ENCODE measurements at regions of chr1 and their contacts with region 1.

Region 1: DNA sequence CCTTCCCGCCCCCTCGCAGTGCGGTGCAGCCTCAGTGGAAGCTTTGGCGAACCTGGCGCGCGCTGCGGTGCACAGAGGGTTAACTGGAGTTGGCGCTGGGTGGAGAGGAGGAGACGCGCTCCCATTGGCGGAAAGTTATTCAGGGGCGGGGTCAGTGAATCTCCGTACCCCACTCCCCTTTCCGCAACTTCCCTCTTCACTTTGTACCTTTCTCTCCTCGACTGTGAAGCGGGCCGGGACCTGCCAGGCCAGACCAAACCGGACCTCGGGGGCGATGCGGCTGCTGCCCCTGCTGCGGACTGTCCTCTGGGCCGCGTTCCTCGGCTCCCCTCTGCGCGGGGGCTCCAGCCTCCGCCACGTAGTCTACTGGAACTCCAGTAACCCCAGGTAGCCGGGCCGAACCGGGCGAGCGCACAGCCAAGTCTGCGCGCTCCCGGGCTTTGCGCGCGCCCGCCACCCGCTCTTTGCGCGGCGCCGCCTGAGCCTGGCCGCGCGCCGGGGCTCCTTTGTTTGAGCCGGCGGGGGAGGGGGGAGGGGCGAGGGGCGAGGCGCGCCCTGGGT is at the start of gene EFNA4:
- DNase-seq: peak; percentile 96
- H3K4me3 ChIP-seq: peak within 1 kb of the TSS; percentile 81
- H3K27ac ChIP-seq: peak within 1 kb of the TSS; percentile 89
- H3K4me1 ChIP-seq: peaks cover 31% of the 10 kb centered on the region
- H3K27me3 ChIP-seq: no peaks in the 10 kb centered on the region
- CTCF ChIP-seq: no peak
- total RNA-seq, gene EFNA4: 17.0 and 18.8 TPM in 2 replicates

Region 2: DNA sequence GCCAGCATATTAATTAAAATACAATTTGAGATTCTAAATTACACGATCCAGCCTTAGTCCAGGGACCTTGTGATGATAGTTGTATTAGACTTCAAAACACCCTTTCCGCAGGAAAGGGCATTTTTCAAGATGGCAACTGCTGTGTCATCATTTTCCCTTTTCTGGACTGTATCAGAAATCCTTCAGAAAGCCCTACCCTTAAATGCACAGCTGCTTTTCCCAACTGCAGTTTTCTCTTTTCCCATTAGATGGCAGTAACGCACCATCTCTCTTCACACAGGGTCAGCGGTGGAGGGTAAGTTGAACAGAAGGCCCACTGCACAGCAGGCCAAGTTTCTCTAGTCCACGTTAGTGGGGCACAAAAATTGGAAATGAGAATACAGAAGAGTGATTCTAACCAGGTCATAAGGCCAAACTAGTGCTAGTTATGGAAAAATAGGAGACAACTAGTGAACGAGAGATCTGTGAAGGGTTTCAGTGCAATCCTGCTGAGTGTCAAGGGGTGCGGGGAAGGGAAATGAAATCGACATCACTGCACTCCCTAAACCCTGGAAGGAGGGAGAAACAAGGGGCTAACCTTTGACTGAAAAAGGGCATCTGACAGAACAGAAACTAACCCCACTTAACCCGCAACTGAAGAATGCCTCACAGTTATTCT is 583.7 kb before region 1 on chr1:
- CTCF ChIA-PET with region 1: no interaction called
- POLR2A ChIA-PET with region 1: no interaction called
- intact Hi-C with region 1: loop called (anchors 5 kb)
- DNase-seq: peak; percentile 95
- H3K4me3 ChIP-seq: no peak overlapping the region
- H3K27ac ChIP-seq: peak overlapping the region; percentile 39
- H3K4me1 ChIP-seq: peaks cover 33% of the 10 kb centered on the region
- H3K27me3 ChIP-seq: no peaks in the 10 kb centered on the region
- CTCF ChIP-seq: peak; percentile 95

Region 3: GRCh38 chr1:154772606-154773506 is 290.8 kb before region 1 on chr1:
- CTCF ChIA-PET with region 1: no interaction called
- POLR2A ChIA-PET with region 1: no interaction called
- intact Hi-C with region 1: no loop called
- DNase-seq: peak; percentile 40
- H3K4me3 ChIP-seq: no peak overlapping the region
- H3K27ac ChIP-seq: no peak overlapping the region
- H3K4me1 ChIP-seq: no peaks in the 10 kb centered on the region
- H3K27me3 ChIP-seq: no peaks in the 10 kb centered on the region
- CTCF ChIP-seq: peak; percentile 41

Region 4: GRCh38 chr1:154961497-154962262 is 102.0 kb before region 1 on chr1 and contains the start of gene PYGO2:
- CTCF ChIA-PET with region 1: no interaction called
- POLR2A ChIA-PET with region 1: no interaction called
- intact Hi-C with region 1: loop called (anchors 5 kb)
- DNase-seq: peak; percentile 90
- H3K4me3 ChIP-seq: peak within 1 kb of the TSS; percentile 97
- H3K27ac ChIP-seq: peak within 1 kb of the TSS; percentile 99
- H3K4me1 ChIP-seq: peaks cover 18% of the 10 kb centered on the region
- H3K27me3 ChIP-seq: no peaks in the 10 kb centered on the region
- CTCF ChIP-seq: peak; percentile 66
- total RNA-seq, gene PYGO2: 46.3 and 48.5 TPM in 2 replicates

Region 5: GRCh38 chr1:155038602-155039307 is 24.9 kb before region 1 on chr1:
- CTCF ChIA-PET with region 1: no interaction called
- POLR2A ChIA-PET with region 1: no interaction called
- intact Hi-C with region 1: no loop called
- DNase-seq: no peak
- H3K4me3 ChIP-seq: no peak overlapping the region
- H3K27ac ChIP-seq: no peak overlapping the region
- H3K4me1 ChIP-seq: no peaks in the 10 kb centered on the region
- H3K27me3 ChIP-seq: no peaks in the 10 kb centered on the region
- CTCF ChIP-seq: no peak

Region 6: DNA sequence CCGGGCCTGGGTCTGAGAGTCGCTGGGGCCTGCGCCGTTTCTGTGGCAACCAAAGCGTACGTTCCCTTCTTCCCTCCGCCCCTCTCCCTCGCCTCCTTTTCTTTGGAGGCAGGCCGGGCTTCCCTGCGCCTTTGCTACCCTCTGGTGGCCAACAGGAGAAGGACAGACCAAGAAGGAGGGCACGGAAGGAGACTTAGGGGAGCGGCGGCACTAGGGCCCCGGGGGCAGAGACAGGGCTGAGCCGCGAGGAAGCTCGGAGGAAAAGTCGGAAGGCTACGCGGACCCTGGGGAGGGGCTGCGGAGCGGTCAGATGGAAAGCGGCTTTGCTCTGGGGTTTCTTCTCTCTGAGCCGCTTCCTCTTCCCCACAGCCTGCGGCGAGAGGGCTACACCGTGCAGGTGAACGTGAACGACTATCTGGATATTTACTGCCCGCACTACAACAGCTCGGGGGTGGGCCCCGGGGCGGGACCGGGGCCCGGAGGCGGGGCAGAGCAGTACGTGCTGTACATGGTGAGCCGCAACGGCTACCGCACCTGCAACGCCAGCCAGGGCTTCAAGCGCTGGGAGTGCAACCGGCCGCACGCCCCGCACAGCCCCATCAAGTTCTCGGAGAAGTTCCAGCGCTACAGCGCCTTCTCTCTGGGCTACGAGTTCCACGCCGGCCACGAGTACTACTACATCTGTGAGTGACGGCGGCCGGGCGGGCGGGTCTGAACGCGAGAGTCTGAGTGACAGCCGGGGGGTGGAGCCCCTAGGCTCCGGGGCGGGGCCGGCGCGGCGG is 21.3 kb after region 1 on chr1:
- CTCF ChIA-PET with region 1: interaction called, 35 read pairs
- POLR2A ChIA-PET with region 1: no interaction called
- intact Hi-C with region 1: loop called (anchors 1 kb)
- DNase-seq: peak; percentile 99
- H3K4me3 ChIP-seq: peak overlapping the region; percentile 69
- H3K27ac ChIP-seq: peak overlapping the region; percentile 66
- H3K4me1 ChIP-seq: peaks cover 42% of the 10 kb centered on the region
- H3K27me3 ChIP-seq: peaks cover 22% of the 10 kb centered on the region
- CTCF ChIP-seq: peak; percentile 95

Region 7: DNA sequence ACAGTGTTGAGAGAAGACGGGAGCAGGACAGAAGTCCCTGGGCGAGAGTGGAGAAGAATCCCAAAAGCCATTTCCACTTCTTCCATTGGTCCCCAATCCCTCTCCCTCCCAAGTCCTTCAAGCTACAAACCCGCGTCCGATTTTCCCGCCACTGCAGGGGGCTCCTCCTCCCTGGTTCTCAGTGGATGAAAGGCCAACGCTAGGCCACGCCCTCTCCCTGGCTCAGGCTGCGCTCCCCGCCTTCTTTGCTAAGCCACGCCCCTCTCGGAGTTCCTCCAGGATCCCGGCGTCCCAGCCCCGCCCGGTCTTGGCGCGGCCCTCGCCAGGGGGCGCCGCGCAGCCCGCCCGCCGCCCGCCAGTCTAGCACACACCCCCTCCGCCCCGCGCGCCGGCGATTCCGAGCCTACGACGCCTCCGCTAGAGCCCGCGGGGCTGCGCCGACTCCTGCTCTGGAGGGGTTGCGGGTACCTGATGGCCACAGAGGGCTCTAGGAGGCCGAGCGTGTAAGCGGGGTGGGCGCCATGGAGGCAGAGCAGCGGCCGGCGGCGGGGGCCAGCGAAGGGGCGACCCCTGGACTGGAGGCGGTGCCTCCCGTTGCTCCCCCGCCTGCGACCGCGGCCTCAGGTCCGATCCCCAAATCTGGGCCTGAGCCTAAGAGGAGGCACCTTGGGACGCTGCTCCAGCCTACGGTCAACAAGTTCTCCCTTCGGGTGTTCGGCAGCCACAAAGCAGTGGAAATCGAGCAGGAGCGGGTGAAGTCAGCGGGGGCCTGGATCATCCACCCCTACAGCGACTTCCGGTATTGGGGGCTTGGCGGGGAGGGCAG is 213.7 kb after region 1 on chr1 and contains the start of gene HCN3:
- CTCF ChIA-PET with region 1: no interaction called
- POLR2A ChIA-PET with region 1: no interaction called
- intact Hi-C with region 1: no loop called
- DNase-seq: peak; percentile 98
- H3K4me3 ChIP-seq: peak within 1 kb of the TSS; percentile 73
- H3K27ac ChIP-seq: peak within 1 kb of the TSS; percentile 48
- H3K4me1 ChIP-seq: peaks cover 22% of the 10 kb centered on the region
- H3K27me3 ChIP-seq: no peaks in the 10 kb centered on the region
- CTCF ChIP-seq: peak; percentile 60
- total RNA-seq, gene HCN3: 11.3 and 12.2 TPM in 2 replicates